Posterior cingulate gyrus (tissue), 11 donors: ENCODE measurements at regions of chr16 and their contacts with region 1.

Region 1: DNA sequence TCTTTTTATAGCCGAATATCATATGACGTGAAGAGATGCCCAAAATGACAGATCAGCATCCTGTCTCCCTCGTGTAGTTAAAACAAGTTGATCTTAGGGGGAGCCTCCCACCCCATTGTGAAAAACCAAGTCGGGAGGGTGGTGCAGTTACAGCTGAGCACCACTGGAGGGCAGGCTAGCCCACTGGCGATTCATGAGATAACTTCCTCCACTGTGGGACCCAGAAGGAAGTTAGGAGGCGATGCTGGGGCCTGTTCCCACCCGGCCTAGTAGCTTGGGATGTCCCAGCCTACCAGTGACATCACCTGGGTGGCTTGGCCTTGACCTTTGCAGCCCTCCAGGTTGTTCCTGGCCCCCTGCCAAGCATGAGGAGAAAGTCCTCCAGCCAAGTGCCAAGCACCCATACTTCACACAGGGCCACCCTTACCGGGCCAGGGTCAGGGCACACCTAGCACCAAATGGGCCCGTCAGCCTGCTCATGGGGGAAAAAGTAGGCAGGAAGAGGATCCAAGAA is 8.1 kb upstream of the CPNE2 start:
- DNase-seq: peak; percentile 52 to 96 (median 75)

Region 2: GRCh38 chr16:57167953-57168352 is 83.6 kb after region 1 on chr16:
- intact Hi-C with region 1: loop called (anchors 1 kb)
- DNase-seq: no peak